ENCODE measurements at regions of chr2 and their contacts with region 1.

Region 1: GRCh38 chr2:8544786-8545694 is 136.8 kb upstream of the ID2 start:
- DNase-seq: peak; percentile 96
- ATAC-seq: peak; percentile 73
- H3K4me3 Mint-ChIP-seq: no peak overlapping the region
- H3K27ac Mint-ChIP-seq: peak overlapping the region; percentile 97
- H3K4me1 Mint-ChIP-seq: peaks cover 71% of the 10 kb centered on the region
- H3K27me3 Mint-ChIP-seq: peaks cover 1% of the 10 kb centered on the region
- CTCF ChIP-seq: peak; percentile 52

Region 2: GRCh38 chr2:8303322-8303832 is 241.7 kb before region 1 on chr2:
- CTCF ChIA-PET with region 1: no interaction called
- POLR2A ChIA-PET with region 1: no interaction called
- intact Hi-C with region 1: loop called (anchors 10 kb)
- DNase-seq: peak; percentile 93
- ATAC-seq: peak; percentile 76
- H3K4me3 Mint-ChIP-seq: peak overlapping the region; percentile 31
- H3K27ac Mint-ChIP-seq: peak overlapping the region; percentile 87
- H3K4me1 Mint-ChIP-seq: peaks cover 67% of the 10 kb centered on the region
- H3K27me3 Mint-ChIP-seq: peaks cover 5% of the 10 kb centered on the region
- CTCF ChIP-seq: no peak

Region 3: GRCh38 chr2:8477552-8478470 is 67.2 kb before region 1 on chr2:
- CTCF ChIA-PET with region 1: interaction called, 11 read pairs
- POLR2A ChIA-PET with region 1: interaction called, 25 read pairs
- intact Hi-C with region 1: loop called (anchors 2 kb)
- DNase-seq: peak; percentile 68
- ATAC-seq: peak; percentile 44
- H3K4me3 Mint-ChIP-seq: peak overlapping the region; percentile 8
- H3K27ac Mint-ChIP-seq: peak overlapping the region; percentile 78
- H3K4me1 Mint-ChIP-seq: peaks cover 86% of the 10 kb centered on the region
- H3K27me3 Mint-ChIP-seq: peaks cover 6% of the 10 kb centered on the region
- CTCF ChIP-seq: no peak

Region 4: GRCh38 chr2:8514796-8515758 is 30.0 kb before region 1 on chr2:
- CTCF ChIA-PET with region 1: interaction called, 12 read pairs
- POLR2A ChIA-PET with region 1: interaction called, 34 read pairs
- intact Hi-C with region 1: loop called (anchors 2 kb)
- DNase-seq: peak; percentile 87
- ATAC-seq: peak; percentile 88
- H3K4me3 Mint-ChIP-seq: peak overlapping the region; percentile 38
- H3K27ac Mint-ChIP-seq: peak overlapping the region; percentile 96
- H3K4me1 Mint-ChIP-seq: peaks cover 65% of the 10 kb centered on the region
- H3K27me3 Mint-ChIP-seq: no peaks in the 10 kb centered on the region
- CTCF ChIP-seq: no peak

Region 5: DNA sequence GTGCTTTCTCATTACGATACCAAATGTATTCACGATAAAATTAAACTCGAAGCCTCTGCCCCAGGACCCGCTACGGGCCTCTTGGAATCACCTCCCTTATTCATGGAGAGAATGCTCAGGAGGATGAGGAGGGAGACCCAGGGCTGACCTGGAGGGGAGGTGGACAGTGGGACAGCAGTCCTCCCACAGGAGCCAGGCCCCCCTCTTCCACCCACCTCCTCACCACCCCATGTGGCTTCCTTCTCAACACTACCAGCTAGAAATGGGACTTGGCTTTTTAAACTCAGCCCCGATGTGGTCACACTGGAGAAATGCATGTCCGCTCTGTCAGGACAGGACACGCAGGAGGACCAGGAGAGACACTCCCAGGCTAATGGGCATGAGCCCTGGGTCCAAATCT is 11.1 kb before region 1 on chr2:
- CTCF ChIA-PET with region 1: interaction called, 3 read pairs
- POLR2A ChIA-PET with region 1: interaction called, 14 read pairs
- intact Hi-C with region 1: no loop called
- DNase-seq: no peak
- ATAC-seq: no peak
- H3K4me3 Mint-ChIP-seq: no peak overlapping the region
- H3K27ac Mint-ChIP-seq: no peak overlapping the region
- H3K4me1 Mint-ChIP-seq: peaks cover 21% of the 10 kb centered on the region
- H3K27me3 Mint-ChIP-seq: no peaks in the 10 kb centered on the region
- CTCF ChIP-seq: no peak